ENCODE measurements at regions of chr6 and their contacts with region 1.

Region 1: DNA sequence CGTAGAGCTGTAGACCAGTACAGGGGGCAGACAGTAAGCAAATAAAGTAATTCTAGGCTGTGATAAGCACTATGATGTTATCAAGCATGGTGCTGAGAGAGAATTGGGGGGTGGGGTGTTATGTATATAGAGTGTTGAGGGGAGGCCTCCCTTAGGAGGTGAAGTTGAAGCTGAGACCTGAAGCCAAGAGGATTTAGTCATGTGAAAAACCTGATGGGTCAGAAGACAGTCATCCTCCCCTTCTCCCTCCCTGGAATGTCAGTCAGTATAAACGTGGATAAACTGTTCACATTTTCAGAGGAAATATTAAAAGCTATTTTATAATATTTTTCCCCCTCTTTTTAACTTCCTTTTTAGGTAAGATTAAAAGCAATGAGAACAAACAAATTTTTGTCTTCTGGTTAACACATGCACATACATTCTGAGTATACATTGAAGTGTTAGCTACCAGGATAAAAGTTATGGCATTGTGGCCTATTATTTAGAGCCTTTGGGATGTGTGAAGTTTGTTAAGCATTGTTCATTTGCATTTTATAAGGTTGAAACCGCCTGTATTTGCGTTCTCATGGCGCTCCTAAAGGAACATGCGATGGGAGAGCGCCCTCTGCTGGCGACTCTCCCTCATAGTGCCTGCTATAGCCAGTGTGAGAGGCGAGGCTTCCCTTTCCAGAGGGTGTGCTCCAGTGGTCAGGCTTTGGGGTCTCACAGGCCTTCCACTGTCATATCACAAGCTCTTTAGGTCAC is 35.4 kb upstream of the MAPK13 start:
- DNase-seq: peak; percentile 37
- H3K4me3 ChIP-seq: no peak overlapping the region
- H3K27ac ChIP-seq: no peak overlapping the region
- H3K27me3 ChIP-seq: no peaks in the 10 kb centered on the region
- CTCF ChIP-seq: peak; percentile 97

Region 2: GRCh38 chr6:35973670-35974222 is 121.2 kb before region 1 on chr6:
- CTCF ChIA-PET with region 1: interaction called, 11 read pairs
- POLR2A ChIA-PET with region 1: no interaction called
- DNase-seq: no peak
- H3K4me3 ChIP-seq: no peak overlapping the region
- H3K27ac ChIP-seq: no peak overlapping the region
- H3K27me3 ChIP-seq: no peaks in the 10 kb centered on the region
- CTCF ChIP-seq: no peak

Region 3: GRCh38 chr6:36033935-36034334 is 61.0 kb before region 1 on chr6:
- CTCF ChIA-PET with region 1: interaction called, 129 read pairs
- POLR2A ChIA-PET with region 1: interaction called, 3 read pairs
- DNase-seq: no peak
- H3K4me3 ChIP-seq: no peak overlapping the region
- H3K27ac ChIP-seq: no peak overlapping the region
- H3K27me3 ChIP-seq: no peaks in the 10 kb centered on the region
- CTCF ChIP-seq: no peak

Region 4: DNA sequence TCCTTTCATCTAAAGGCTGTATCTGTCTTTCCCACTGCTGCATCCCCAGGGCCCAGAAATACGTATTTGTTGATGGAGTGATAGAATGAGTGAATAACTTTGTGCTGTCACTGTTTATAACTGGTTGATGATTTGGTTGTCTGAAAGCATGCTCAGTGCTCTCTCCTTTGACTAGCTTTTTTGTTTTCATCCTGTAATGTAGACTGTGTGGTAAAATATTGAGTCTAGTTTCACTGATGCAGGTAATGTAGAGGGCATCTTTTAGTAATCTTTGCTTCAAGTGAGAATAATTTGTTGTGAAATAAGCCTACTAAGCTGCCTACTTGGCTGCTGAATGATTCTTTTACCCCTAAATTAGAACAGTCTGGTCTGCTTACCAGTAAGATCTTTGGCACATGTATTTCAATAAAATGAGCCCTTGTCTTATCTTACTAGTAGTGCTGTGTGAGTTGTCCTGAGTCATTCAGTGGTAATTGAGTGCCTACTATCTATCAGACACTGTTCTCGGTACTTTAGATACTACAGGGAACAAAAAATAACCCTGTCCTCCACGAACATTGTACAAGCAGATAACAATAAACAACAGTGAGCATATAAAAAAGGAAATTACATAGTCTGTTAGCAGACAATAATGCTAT is 27.4 kb before region 1 on chr6:
- CTCF ChIA-PET with region 1: interaction called, 51 read pairs
- POLR2A ChIA-PET with region 1: no interaction called
- DNase-seq: no peak
- H3K4me3 ChIP-seq: no peak overlapping the region
- H3K27ac ChIP-seq: no peak overlapping the region
- H3K27me3 ChIP-seq: no peaks in the 10 kb centered on the region
- CTCF ChIP-seq: no peak

Region 5: DNA sequence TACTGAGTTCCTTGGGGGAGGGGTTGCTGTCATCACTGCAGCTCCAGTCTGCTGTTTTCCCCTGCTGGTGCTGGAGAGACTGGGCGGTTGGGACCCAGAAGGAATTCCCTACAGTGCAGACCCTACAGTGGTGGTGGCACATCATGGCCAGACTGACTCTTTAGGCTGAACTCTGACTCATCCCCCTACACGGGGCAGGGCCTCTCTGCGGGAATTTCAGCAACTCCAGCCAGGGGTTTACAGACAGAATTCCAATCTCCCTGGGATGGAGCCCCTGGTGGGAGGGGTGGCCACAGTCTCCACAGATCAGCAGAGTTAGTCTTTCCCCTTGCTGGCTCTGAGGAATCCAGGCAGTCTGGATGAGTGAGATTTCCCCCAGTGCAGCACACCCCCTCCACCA is 11.5 kb before region 1 on chr6:
- CTCF ChIA-PET with region 1: interaction called, 42 read pairs
- POLR2A ChIA-PET with region 1: no interaction called
- DNase-seq: no peak
- H3K4me3 ChIP-seq: no peak overlapping the region
- H3K27ac ChIP-seq: no peak overlapping the region
- H3K27me3 ChIP-seq: no peaks in the 10 kb centered on the region
- CTCF ChIP-seq: no peak

Region 6: DNA sequence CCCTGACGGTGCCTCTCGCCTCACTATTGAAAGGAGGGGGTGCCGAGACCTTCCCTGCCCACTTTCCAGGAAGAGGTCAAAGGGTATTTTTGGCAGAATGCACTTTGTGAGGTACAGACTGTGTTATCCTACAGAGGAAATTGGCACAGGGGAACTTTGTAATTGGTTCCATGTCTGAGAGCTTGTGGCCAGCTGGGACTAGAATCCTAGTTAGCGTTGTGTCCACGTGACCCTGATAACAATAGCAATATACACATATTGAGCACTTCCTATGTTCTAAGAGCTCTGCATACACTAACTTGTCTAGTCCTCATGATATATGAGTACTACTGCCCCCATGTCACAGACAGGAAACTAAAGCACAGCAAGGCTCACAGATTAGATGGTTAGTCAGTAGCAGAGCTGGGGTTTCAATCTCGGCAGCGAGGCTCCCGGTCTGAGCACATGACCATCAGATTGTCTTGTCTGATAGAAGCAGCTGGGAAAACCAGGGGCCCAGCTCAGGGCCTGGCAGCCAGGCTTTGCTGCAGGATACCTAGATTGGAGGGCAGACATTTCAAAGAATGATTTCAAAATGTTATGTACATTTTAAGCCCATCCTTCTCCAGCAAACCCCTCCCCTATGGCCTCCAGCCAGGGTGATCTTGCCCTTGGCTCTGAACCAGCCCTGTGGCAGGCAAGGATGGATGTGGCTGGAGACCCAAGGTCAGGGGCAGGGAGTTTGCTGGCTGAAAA is 36.8 kb after region 1 on chr6:
- CTCF ChIA-PET with region 1: interaction called, 10 read pairs
- POLR2A ChIA-PET with region 1: no interaction called
- DNase-seq: peak; percentile 15
- H3K4me3 ChIP-seq: 0 out of 2 replicates have a peak overlapping the region, but pooled peaks have one; percentile 10
- H3K27ac ChIP-seq: peak overlapping the region; percentile 39
- H3K27me3 ChIP-seq: no peaks in the 10 kb centered on the region
- CTCF ChIP-seq: no peak

Region 7: GRCh38 chr6:36451391-36451790 is 356.5 kb after region 1 on chr6:
- CTCF ChIA-PET with region 1: no interaction called
- POLR2A ChIA-PET with region 1: no interaction called
- DNase-seq: no peak
- H3K4me3 ChIP-seq: no peak overlapping the region
- H3K27ac ChIP-seq: no peak overlapping the region
- H3K27me3 ChIP-seq: no peaks in the 10 kb centered on the region
- CTCF ChIP-seq: no peak

Measured in AG04450 (cell line).